ENCODE measurements at regions of chr19 and their contacts with region 1.

Region 1: GRCh38 chr19:41263850-41264580 is at the start of gene HNRNPUL1:
- DNase-seq: peak; percentile 98 to 100 (median 100)
- ATAC-seq: peak; percentile 62
- H3K4me3 ChIP-seq: peak within 1 kb of the TSS; percentile 71 to 87
- H3K4me3 Mint-ChIP-seq: peak within 1 kb of the TSS; percentile 94
- H3K27ac ChIP-seq: peak within 1 kb of the TSS; percentile 97 to 98
- H3K27ac Mint-ChIP-seq: peak within 1 kb of the TSS; percentile 100
- H3K4me1 ChIP-seq: peaks cover 36% of the 10 kb centered on the region
- H3K4me1 Mint-ChIP-seq: peaks cover 43% of the 10 kb centered on the region
- H3K27me3 ChIP-seq: no peaks in the 10 kb centered on the region
- H3K27me3 Mint-ChIP-seq: no peaks in the 10 kb centered on the region
- CTCF ChIP-seq: no peak
- total RNA-seq, gene HNRNPUL1: 416 to 448 TPM

Region 2: GRCh38 chr19:39397360-39398296 is 1866.4 kb before region 1 on chr19:
- CTCF ChIA-PET with region 1: no interaction called
- POLR2A ChIA-PET with region 1: no interaction called
- intact Hi-C with region 1: loop called in 1 of 2 experiments (anchors 5 kb)
- DNase-seq: peak; percentile 88 to 98 (median 94)
- ATAC-seq: peak; percentile 41
- H3K4me3 ChIP-seq: peak overlapping the region; percentile 12 to 18
- H3K4me3 Mint-ChIP-seq: peak overlapping the region; percentile 71
- H3K27ac ChIP-seq: peak overlapping the region; percentile 33 to 92
- H3K27ac Mint-ChIP-seq: peak overlapping the region; percentile 96
- H3K4me1 ChIP-seq: peaks cover 51% of the 10 kb centered on the region
- H3K4me1 Mint-ChIP-seq: peaks cover 56% of the 10 kb centered on the region
- H3K27me3 ChIP-seq: no peaks in the 10 kb centered on the region
- H3K27me3 Mint-ChIP-seq: no peaks in the 10 kb centered on the region
- CTCF ChIP-seq: peak; percentile 94

Region 3: DNA sequence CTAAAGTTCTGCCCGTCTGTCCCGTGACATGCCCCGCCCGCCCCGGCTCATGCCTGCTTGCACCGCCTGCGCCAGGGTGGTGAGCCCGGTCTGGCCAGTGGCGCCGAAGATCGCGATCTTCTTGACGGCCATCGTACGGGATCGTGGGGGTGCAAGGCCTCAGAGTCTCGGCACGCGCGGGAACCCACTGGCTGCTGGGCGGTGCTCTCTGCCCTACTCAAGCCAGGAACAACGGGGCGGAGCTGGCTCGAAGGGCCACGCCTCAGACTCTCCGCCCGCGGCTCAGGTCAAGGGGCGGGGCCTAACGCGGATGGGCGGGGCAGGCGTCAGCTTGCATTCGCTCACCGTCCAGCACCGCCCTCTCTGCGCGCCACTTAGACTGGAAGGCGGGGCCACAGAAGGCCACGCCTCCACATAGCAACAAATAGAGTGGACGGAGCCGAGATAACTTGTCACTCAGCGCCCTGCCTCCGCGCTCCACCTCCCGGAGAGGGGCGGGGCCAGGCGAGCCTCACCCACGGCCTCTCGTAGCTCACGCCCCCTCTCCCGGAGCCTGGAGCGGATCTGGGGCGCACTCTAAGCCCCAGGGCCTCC is 798.4 kb before region 1 on chr19 and contains the start of gene BLVRB:
- CTCF ChIA-PET with region 1: no interaction called
- POLR2A ChIA-PET with region 1: no interaction called
- intact Hi-C with region 1: loop called (anchors 2 kb)
- DNase-seq: peak; percentile 98 to 100 (median 100)
- ATAC-seq: peak; percentile 77
- H3K4me3 ChIP-seq: peak within 1 kb of the TSS; percentile 60 to 72
- H3K4me3 Mint-ChIP-seq: peak within 1 kb of the TSS; percentile 81
- H3K27ac ChIP-seq: peak within 1 kb of the TSS; percentile 41 to 93
- H3K27ac Mint-ChIP-seq: peak within 1 kb of the TSS; percentile 89
- H3K4me1 ChIP-seq: peaks cover 25% of the 10 kb centered on the region
- H3K4me1 Mint-ChIP-seq: peaks cover 26% of the 10 kb centered on the region
- H3K27me3 ChIP-seq: peaks cover 0 to 2% of the 10 kb centered on the region in 2 experiments
- H3K27me3 Mint-ChIP-seq: peaks cover 13% of the 10 kb centered on the region
- CTCF ChIP-seq: no peak
- total RNA-seq, gene BLVRB: 5.1 to 6.4 TPM

Region 4: GRCh38 chr19:40777937-40778705 is 485.9 kb before region 1 on chr19 and contains the start of gene RAB4B:
- CTCF ChIA-PET with region 1: no interaction called
- POLR2A ChIA-PET with region 1: interaction called, 12 read pairs
- intact Hi-C with region 1: no loop called
- DNase-seq: peak; percentile 100
- ATAC-seq: peak; percentile 83
- H3K4me3 ChIP-seq: peak within 1 kb of the TSS; percentile 87 to 89
- H3K4me3 Mint-ChIP-seq: peak within 1 kb of the TSS; percentile 92
- H3K27ac ChIP-seq: peak within 1 kb of the TSS; percentile 93 to 98
- H3K27ac Mint-ChIP-seq: peak within 1 kb of the TSS; percentile 95
- H3K4me1 ChIP-seq: peaks cover 26% of the 10 kb centered on the region
- H3K4me1 Mint-ChIP-seq: peaks cover 37% of the 10 kb centered on the region
- H3K27me3 ChIP-seq: no peaks in the 10 kb centered on the region
- H3K27me3 Mint-ChIP-seq: no peaks in the 10 kb centered on the region
- CTCF ChIP-seq: no peak
- total RNA-seq, gene RAB4B: 19.9 to 21.3 TPM

Region 5: GRCh38 chr19:41039806-41040205 is 224.2 kb before region 1 on chr19:
- CTCF ChIA-PET with region 1: no interaction called
- POLR2A ChIA-PET with region 1: no interaction called
- intact Hi-C with region 1: no loop called
- DNase-seq: no peak
- ATAC-seq: no peak
- H3K4me3 ChIP-seq: no peak overlapping the region
- H3K4me3 Mint-ChIP-seq: no peak overlapping the region
- H3K27ac ChIP-seq: no peak overlapping the region
- H3K27ac Mint-ChIP-seq: no peak overlapping the region
- H3K4me1 ChIP-seq: no peaks in the 10 kb centered on the region
- H3K4me1 Mint-ChIP-seq: no peaks in the 10 kb centered on the region
- H3K27me3 ChIP-seq: no peaks in the 10 kb centered on the region
- H3K27me3 Mint-ChIP-seq: peaks cover 7% of the 10 kb centered on the region
- CTCF ChIP-seq: no peak

Region 6: DNA sequence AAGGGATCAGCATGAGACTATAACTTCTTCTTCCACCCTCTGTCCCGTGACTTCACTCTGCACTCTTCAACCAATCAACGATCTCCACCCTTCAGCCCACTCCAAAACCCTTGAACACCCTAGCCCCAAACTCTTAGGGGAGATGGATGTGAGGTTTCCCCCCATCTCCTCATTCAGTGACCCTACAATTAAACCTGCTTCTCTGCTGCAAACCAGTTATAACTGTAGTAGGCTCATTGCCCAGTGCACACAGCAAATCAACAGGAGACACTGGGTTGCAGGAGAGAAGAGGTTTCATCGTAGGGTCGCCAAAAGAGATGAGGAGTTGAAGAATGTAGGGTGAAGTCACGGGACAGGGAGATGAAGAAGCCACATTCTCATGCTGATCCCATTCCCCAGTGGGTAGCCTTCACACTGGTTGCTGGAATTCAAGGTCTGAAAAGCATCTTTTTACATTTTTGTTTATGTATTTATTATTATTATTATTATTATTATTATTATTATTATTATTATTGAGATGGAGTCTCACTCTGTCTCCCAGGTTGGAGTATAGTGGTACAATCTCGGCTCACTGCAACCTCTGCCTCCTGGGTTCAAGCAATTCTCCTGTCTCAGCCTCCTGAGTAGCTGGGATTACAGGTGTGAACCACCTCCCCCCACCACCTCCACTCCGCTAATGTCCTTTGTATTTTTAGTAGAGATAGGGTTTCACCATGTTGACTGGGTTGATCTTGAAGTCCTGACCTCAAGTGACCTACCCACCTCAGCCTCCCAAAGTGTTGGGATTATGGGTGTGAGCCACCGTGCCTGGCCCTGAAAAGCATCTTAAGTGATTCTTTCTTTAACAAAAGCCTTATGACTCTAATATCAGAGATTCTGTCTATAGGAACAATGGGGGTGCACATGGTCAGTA is 76.8 kb before region 1 on chr19:
- CTCF ChIA-PET with region 1: no interaction called
- POLR2A ChIA-PET with region 1: no interaction called
- intact Hi-C with region 1: no loop called
- DNase-seq: no peak
- ATAC-seq: no peak
- H3K4me3 ChIP-seq: no peak overlapping the region
- H3K4me3 Mint-ChIP-seq: no peak overlapping the region
- H3K27ac ChIP-seq: no peak overlapping the region
- H3K27ac Mint-ChIP-seq: no peak overlapping the region
- H3K4me1 ChIP-seq: no peaks in the 10 kb centered on the region
- H3K4me1 Mint-ChIP-seq: no peaks in the 10 kb centered on the region
- H3K27me3 ChIP-seq: peaks cover 0 to 10% of the 10 kb centered on the region in 2 experiments
- H3K27me3 Mint-ChIP-seq: peaks cover 29% of the 10 kb centered on the region
- CTCF ChIP-seq: no peak

Region 7: GRCh38 chr19:41206926-41207750 is 56.9 kb before region 1 on chr19:
- CTCF ChIA-PET with region 1: interaction called, 74 read pairs
- POLR2A ChIA-PET with region 1: interaction called, 50 read pairs
- intact Hi-C with region 1: loop called (anchors 1 kb)
- DNase-seq: no peak
- ATAC-seq: no peak
- H3K4me3 ChIP-seq: no peak overlapping the region
- H3K4me3 Mint-ChIP-seq: no peak overlapping the region
- H3K27ac ChIP-seq: no peak overlapping the region
- H3K27ac Mint-ChIP-seq: no peak overlapping the region
- H3K4me1 ChIP-seq: no peaks in the 10 kb centered on the region
- H3K4me1 Mint-ChIP-seq: peaks cover 6% of the 10 kb centered on the region
- H3K27me3 ChIP-seq: no peaks in the 10 kb centered on the region
- H3K27me3 Mint-ChIP-seq: no peaks in the 10 kb centered on the region
- CTCF ChIP-seq: no peak

Region 8: GRCh38 chr19:41327576-41328156 is 63.7 kb after region 1 on chr19:
- CTCF ChIA-PET with region 1: interaction called, 4 read pairs
- POLR2A ChIA-PET with region 1: interaction called, 5 read pairs
- intact Hi-C with region 1: loop called in 1 of 2 experiments (anchors 1 kb)
- DNase-seq: peak in 8 of 9 experiments; percentile 68 to 98 (median 82)
- ATAC-seq: no peak
- H3K4me3 ChIP-seq: peak overlapping the region; percentile 21 to 23
- H3K4me3 Mint-ChIP-seq: peak overlapping the region; percentile 74
- H3K27ac ChIP-seq: peak overlapping the region; percentile 50 to 78
- H3K27ac Mint-ChIP-seq: peak overlapping the region; percentile 98
- H3K4me1 ChIP-seq: peaks cover 63% of the 10 kb centered on the region
- H3K4me1 Mint-ChIP-seq: peaks cover 69% of the 10 kb centered on the region
- H3K27me3 ChIP-seq: no peaks in the 10 kb centered on the region
- H3K27me3 Mint-ChIP-seq: no peaks in the 10 kb centered on the region
- CTCF ChIP-seq: no peak

Region 9: GRCh38 chr19:41479757-41480191 is 215.8 kb after region 1 on chr19:
- CTCF ChIA-PET with region 1: no interaction called
- POLR2A ChIA-PET with region 1: no interaction called
- intact Hi-C with region 1: no loop called
- DNase-seq: no peak
- ATAC-seq: no peak
- H3K4me3 ChIP-seq: no peak overlapping the region
- H3K4me3 Mint-ChIP-seq: no peak overlapping the region
- H3K27ac ChIP-seq: no peak overlapping the region
- H3K27ac Mint-ChIP-seq: no peak overlapping the region
- H3K4me1 ChIP-seq: no peaks in the 10 kb centered on the region
- H3K4me1 Mint-ChIP-seq: no peaks in the 10 kb centered on the region
- H3K27me3 ChIP-seq: peaks cover 0 to 7% of the 10 kb centered on the region in 2 experiments
- H3K27me3 Mint-ChIP-seq: peaks cover 61% of the 10 kb centered on the region
- CTCF ChIP-seq: no peak

Region 10: GRCh38 chr19:42268704-42269477 is 1004.9 kb after region 1 on chr19 and contains the start of gene CIC:
- CTCF ChIA-PET with region 1: no interaction called
- POLR2A ChIA-PET with region 1: no interaction called
- intact Hi-C with region 1: loop called in 1 of 2 experiments (anchors 5 kb)
- DNase-seq: peak; percentile 97 to 100 (median 99)
- ATAC-seq: peak; percentile 70
- H3K4me3 ChIP-seq: peak within 1 kb of the TSS; percentile 70 to 83
- H3K4me3 Mint-ChIP-seq: peak within 1 kb of the TSS; percentile 86
- H3K27ac ChIP-seq: peak within 1 kb of the TSS; percentile 93 to 99
- H3K27ac Mint-ChIP-seq: peak within 1 kb of the TSS; percentile 97
- H3K4me1 ChIP-seq: peaks cover 29% of the 10 kb centered on the region
- H3K4me1 Mint-ChIP-seq: peaks cover 34% of the 10 kb centered on the region
- H3K27me3 ChIP-seq: no peaks in the 10 kb centered on the region
- H3K27me3 Mint-ChIP-seq: no peaks in the 10 kb centered on the region
- CTCF ChIP-seq: no peak
- total RNA-seq, gene CIC: 111 to 112 TPM